Naive thymus-derived CD4-positive, alpha-beta T cell (primary cell): ENCODE measurements at regions of chr16 and their contacts with region 1.

Region 1: DNA sequence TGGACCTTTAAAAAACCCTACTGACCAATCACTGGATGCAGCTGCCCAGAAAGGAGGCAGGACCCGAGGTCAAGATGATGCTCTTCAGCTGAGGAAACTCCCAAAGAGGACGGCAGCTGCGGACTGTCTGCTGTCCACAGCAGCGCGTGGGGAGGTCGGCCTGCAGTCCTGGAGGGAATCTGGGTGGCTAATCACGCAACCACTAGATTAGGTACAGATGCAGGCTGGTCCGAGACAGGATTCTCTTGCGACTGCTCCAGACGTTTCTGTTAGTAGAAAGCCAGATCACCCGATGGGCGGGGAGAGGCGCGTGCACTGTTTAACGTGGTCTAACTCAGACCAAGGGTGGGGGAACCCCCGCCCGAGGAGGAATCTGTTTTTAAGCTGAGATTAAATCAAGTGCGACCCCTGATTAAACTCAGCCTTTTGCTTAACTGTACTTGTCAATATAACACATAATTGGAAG is 8.8 kb downstream of the CTRB2 start:
- DNase-seq: no peak
- ATAC-seq: no peak
- H3K4me3 ChIP-seq: no peak overlapping the region
- H3K4me3 Mint-ChIP-seq: no peak overlapping the region
- H3K27ac ChIP-seq: no peak overlapping the region
- H3K27ac Mint-ChIP-seq: no peak overlapping the region
- H3K4me1 ChIP-seq: peaks cover 0 to 14% of the 10 kb centered on the region in 2 donors
- H3K4me1 Mint-ChIP-seq: peaks cover 10 to 29% (median 22%) of the 10 kb centered on the region in 7 donors
- H3K27me3 ChIP-seq: peaks cover 0 to 3% of the 10 kb centered on the region in 2 donors
- H3K27me3 Mint-ChIP-seq: peaks cover 12 to 24% (median 14%) of the 10 kb centered on the region in 5 donors

Region 2: DNA sequence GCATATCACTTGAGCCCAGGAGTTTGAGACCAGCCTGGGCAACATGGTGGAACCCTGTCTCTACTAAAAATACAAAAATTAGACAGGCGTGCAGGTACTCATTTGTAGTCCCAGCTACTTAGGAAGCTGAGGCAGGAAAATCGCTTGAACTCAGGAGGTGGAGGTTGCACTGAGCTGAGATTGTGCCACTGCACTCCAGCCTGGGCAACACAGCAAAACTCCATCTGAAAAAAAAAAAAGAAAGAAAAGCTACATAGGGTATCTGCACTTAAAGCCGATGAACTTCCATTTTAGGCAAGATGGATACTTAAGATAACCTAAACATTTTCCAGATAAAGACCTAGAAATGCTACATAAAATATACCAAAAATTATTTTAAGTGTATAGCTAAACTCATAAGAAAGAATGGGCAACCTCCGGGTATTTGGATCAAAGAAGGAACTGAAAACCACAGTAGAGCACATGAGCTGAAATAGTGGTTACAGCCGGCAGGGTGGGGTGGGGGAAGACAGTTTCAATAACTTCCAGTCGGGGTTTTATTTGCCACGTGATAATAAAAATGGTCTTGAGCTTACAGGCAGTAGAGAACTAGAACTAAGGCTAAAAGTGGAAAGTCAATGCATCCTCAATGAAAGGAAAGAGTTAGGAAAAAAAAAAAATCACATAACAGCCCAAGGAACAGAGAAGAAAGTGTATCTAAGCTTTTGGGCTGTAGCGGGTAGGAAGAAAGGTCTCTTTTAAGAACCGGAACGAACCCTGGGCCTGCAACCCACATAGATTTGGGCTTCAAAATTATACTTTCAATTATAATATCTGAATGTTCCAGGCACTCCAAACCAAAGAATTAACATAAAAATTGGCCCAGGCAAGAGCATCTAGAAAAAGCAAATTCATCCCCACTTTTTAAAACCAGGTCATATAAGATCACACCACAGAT is 182.0 kb after region 1 on chr16:
- CTCF ChIA-PET with region 1: interaction called, 18 read pairs
- POLR2A ChIA-PET with region 1: interaction called, 3 read pairs
- intact Hi-C with region 1: loop called (anchors 1 kb)
- DNase-seq: peak in 7 of 9 donors; percentile 45 to 67 (median 64)
- ATAC-seq: peak; percentile 92
- H3K4me3 ChIP-seq: peak overlapping the region; percentile 28
- H3K4me3 Mint-ChIP-seq: peak overlapping the region; percentile 73 to 90 (median 83)
- H3K27ac ChIP-seq: no peak overlapping the region
- H3K27ac Mint-ChIP-seq: peak overlapping the region; percentile 17 to 84 (median 63)
- H3K4me1 ChIP-seq: peaks cover 15 to 27% of the 10 kb centered on the region in 2 donors
- H3K4me1 Mint-ChIP-seq: peaks cover 37 to 51% (median 48%) of the 10 kb centered on the region in 7 donors
- H3K27me3 ChIP-seq: no peaks in the 10 kb centered on the region
- H3K27me3 Mint-ChIP-seq: peaks cover 0 to 42% (median 0%) of the 10 kb centered on the region in 5 donors

Region 3: GRCh38 chr16:75402821-75403475 is 204.8 kb after region 1 on chr16:
- CTCF ChIA-PET with region 1: interaction called, 8 read pairs
- POLR2A ChIA-PET with region 1: no interaction called
- intact Hi-C with region 1: loop called (anchors 1 kb)
- DNase-seq: peak in 5 of 9 donors; percentile 20 to 45 (median 31)
- ATAC-seq: peak; percentile 69
- H3K4me3 ChIP-seq: no peak overlapping the region
- H3K4me3 Mint-ChIP-seq: no peak overlapping the region
- H3K27ac ChIP-seq: no peak overlapping the region
- H3K27ac Mint-ChIP-seq: peak overlapping the region in 1 of 9 donors; percentile 47
- H3K4me1 ChIP-seq: no peaks in the 10 kb centered on the region
- H3K4me1 Mint-ChIP-seq: peaks cover 0 to 6% (median 0%) of the 10 kb centered on the region in 7 donors
- H3K27me3 ChIP-seq: no peaks in the 10 kb centered on the region
- H3K27me3 Mint-ChIP-seq: no peaks in the 10 kb centered on the region

Region 4: DNA sequence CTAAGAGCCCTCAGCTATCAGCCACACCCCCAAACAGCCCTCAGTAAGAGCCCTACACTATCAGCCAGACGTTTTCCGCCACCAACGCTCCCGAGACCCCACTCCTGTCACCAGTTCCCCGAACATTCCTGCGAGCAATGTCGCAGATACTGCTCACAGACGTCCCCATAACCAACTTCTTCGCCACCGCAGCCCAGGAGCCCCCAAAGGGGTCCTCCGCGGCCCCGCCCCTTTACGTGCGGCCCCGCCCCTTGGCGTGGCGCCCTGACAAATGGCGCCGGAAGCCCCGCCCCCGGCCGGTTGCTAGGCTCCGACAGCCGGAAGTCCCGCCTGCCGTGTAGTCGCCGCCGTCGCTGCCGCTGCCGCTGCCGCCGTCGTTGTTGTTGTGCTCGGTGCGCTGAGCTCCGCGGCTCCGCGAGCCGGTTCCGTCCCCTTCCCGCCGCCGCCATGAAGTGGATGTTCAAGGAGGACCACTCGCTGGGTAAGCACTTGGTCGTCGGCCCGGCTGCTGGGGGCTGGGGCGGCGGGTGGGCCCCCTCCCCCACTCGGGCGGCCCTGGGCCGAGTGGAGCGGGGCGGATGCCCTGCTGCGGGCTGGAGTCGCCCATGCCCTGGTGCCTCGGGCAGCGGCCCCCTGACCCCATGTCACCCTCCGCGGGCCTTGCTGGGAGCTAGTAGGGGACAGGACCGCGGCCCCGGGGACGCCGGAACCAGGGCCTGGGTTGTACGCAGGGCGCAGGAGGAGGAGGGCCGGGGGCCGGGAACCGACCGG is 368.1 kb after region 1 on chr16 and contains the start of gene GABARAPL2:
- CTCF ChIA-PET with region 1: no interaction called
- POLR2A ChIA-PET with region 1: no interaction called
- intact Hi-C with region 1: loop called in 1 of 2 experiments (anchors 5 kb)
- DNase-seq: peak; percentile 87 to 97 (median 92)
- ATAC-seq: peak; percentile 90
- H3K4me3 ChIP-seq: peak within 1 kb of the TSS; percentile 93
- H3K4me3 Mint-ChIP-seq: peak within 1 kb of the TSS; percentile 88 to 100 (median 96)
- H3K27ac ChIP-seq: peak within 1 kb of the TSS; percentile 90
- H3K27ac Mint-ChIP-seq: peak within 1 kb of the TSS; percentile 79 to 100 (median 92)
- H3K4me1 ChIP-seq: peaks cover 20 to 27% of the 10 kb centered on the region in 2 donors
- H3K4me1 Mint-ChIP-seq: peaks cover 25 to 50% (median 47%) of the 10 kb centered on the region in 7 donors
- H3K27me3 ChIP-seq: no peaks in the 10 kb centered on the region
- H3K27me3 Mint-ChIP-seq: peaks cover 8 to 16% (median 13%) of the 10 kb centered on the region in 5 donors
- total RNA-seq, gene GABARAPL2: 57.9 to 81.2 (median 75.6) TPM

Region 5: DNA sequence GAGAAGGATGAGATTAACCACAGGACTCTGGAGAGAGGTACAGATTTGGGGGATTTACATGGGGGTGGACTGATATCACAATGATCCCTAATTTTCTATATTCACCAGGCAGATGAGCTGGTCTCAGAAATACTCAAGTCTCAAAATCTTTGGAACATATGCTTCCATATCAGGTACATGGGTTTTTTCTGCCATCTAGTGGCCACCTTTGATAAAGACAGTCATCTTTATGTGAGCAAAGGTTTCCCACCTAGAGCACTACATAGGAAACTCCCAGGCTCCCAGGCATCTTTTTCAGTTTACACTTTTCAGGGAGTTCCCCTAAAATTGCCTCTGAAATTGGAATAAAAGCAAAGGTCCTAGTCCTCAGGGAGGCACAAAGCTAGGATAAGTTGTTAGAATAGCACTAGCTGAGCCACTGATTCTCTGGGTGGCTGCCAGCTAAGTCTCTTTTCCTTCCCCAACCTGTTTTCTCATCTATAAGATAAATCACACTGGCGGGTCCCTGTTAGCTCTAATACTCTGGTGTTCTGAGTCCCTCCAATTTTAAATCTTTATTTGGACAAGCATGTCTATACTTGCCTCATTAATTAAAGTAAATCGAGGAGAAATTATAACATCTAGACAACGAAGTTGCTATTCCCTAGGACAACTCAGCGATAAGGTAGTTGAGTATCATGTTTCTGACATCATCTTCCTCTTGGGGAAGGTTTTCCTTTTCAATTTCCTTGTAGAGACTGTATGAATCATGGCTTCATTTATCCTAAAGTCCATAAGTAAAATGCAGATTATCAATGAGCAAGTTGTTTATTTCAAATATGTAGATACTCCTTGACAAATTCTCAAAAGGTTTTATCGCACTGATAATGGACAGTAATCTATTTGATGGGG is 1973.8 kb after region 1 on chr16:
- CTCF ChIA-PET with region 1: interaction called, 12 read pairs
- POLR2A ChIA-PET with region 1: no interaction called
- intact Hi-C with region 1: no loop called
- DNase-seq: peak in 6 of 9 donors; percentile 25 to 50 (median 40)
- ATAC-seq: peak; percentile 73
- H3K4me3 ChIP-seq: no peak overlapping the region
- H3K4me3 Mint-ChIP-seq: no peak overlapping the region
- H3K27ac ChIP-seq: no peak overlapping the region
- H3K27ac Mint-ChIP-seq: no peak overlapping the region
- H3K4me1 ChIP-seq: no peaks in the 10 kb centered on the region
- H3K4me1 Mint-ChIP-seq: no peaks in the 10 kb centered on the region
- H3K27me3 ChIP-seq: peaks cover 0 to 10% of the 10 kb centered on the region in 2 donors
- H3K27me3 Mint-ChIP-seq: peaks cover 17 to 56% (median 42%) of the 10 kb centered on the region in 5 donors